ENCODE measurements at regions of chr14 and their contacts with region 1.

Region 1: DNA sequence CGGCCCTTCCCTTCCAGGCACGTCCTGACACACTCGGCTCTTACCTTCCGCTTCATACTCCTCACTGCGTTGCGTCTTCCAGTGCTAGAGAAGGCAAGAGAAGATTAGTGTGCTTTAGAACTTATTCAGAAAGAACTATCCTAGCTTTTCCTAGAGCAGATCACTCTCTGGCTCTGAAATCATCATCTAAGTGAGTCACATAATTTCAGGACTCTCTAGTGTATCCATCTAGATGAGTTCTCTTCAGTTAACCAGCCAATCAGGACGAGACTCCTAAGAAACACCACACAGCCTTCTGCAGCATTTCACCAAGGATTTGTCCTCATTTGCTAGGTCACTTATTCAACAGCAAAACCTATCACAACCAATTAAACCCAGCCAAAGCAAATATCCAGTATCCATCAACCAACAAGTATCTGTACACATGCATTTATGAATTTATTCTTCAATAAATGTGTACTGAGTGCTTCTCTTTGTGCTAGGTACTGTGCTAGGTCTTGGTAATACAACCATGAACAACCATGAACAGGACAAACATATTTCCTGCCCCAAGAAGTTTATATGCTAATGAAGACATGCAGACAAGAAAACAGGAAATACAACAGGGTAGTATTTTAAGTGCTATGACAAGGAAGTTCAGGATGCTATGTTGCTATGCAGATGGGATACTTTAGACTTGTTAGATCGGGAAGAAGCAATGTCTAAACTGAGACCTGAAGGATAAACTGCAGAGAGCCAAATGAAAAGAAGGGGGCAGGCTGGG is 52.1 kb downstream of the NIN start:
- DNase-seq: no peak
- H3K4me3 ChIP-seq: no peak overlapping the region
- H3K27ac ChIP-seq: no peak overlapping the region
- H3K27me3 ChIP-seq: no peaks in the 10 kb centered on the region
- CTCF ChIP-seq: no peak

Region 2: GRCh38 chr14:50559990-50560930 is 218.6 kb before region 1 on chr14 and contains the start of gene ATL1:
- CTCF ChIA-PET with region 1: interaction called, 11 read pairs
- POLR2A ChIA-PET with region 1: no interaction called
- DNase-seq: peak; percentile 45
- H3K4me3 ChIP-seq: peak within 1 kb of the TSS; percentile 78
- H3K27ac ChIP-seq: peak within 1 kb of the TSS; percentile 71
- H3K27me3 ChIP-seq: no peaks in the 10 kb centered on the region
- CTCF ChIP-seq: no peak
- polyA plus RNA-seq, gene ATL1: 8.2 and 11.5 TPM in 2 replicates

Region 3: DNA sequence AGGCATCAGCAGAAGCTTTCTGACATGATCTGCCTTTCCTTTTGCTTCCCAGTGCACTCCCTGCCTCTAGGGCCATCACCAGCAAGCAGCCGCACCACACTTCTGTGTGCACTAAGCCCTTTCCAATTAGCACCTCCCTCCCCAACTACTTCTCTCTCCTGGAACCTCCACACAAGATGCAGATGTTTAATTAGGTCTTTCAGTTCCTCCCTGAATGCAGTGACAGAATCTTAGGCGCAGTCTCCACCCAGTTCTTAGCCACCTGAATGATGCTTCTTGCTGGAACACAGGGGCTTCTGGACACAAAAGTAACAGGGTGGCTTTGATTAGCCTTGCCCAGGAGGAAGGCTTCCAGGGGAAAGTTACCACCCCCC is 19.1 kb after region 1 on chr14:
- CTCF ChIA-PET with region 1: interaction called, 42 read pairs
- POLR2A ChIA-PET with region 1: no interaction called
- DNase-seq: no peak
- H3K4me3 ChIP-seq: no peak overlapping the region
- H3K27ac ChIP-seq: no peak overlapping the region
- H3K27me3 ChIP-seq: no peaks in the 10 kb centered on the region
- CTCF ChIP-seq: no peak

Region 4: DNA sequence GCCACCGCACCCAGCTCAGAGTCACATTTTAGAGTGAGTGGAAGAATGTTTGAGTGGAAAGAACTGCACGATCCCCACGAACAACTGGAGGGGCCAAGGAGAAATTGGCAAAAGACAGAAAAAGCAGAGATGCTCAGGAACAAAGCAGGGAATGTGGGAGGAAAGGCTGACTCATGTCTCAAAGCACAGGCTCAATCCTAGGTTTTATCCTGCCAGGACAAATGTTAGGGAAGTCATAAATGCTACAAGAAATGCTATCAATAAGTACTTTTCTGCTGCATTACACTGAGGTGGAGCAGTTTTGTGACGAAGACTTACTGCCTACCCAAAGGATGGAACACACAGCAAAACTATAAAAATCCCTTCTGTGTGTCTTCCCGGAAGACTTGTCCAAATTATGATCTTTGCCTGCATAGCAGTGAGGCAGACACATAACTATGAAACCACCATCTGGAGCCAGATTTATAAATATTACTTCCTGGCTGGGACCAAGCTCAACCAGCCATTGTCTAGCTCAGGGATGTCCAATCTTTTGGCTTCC is 25.3 kb after region 1 on chr14:
- CTCF ChIA-PET with region 1: interaction called, 18 read pairs
- POLR2A ChIA-PET with region 1: no interaction called
- DNase-seq: no peak
- H3K4me3 ChIP-seq: no peak overlapping the region
- H3K27ac ChIP-seq: peak overlapping the region; percentile 81
- H3K27me3 ChIP-seq: no peaks in the 10 kb centered on the region
- CTCF ChIP-seq: no peak